ENCODE measurements at regions of chr17 and their contacts with region 1.

Region 1: DNA sequence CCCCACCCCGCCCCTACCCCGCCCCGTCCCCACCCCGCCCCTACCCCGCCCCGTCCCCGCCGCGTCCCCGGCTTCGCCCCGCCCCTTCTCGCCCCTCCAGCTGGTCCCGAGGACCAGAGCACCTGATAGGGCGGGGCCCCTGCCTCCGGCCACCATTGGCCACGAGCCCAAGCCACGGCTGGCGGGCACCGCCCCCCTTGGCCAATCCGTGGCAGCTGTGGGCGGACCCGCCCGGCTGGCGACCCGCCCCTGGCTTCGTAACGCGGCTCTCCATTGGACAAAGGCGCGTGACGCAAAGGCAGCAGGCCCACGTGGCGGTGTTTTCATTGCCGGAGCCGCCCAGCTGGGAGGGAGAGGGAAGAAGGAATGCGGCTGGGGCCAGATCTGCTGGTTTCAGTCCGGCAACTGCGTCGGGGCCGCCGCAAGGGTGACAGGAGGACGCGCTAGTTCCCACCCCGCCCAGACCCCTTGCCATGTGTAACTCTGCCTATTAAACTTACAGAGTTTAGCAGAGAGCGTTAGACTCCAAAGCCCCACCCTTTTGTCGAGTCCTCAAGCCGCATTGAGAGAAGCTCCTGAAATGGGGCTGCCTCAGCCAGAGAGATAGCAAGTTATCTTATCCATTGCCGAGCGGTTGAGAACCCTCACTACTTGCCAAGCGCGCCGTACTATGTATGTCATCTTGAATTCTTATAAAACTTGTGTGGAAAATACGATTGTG is 403 bp upstream of the WIPI1 start:
- DNase-seq: peak; percentile 91
- ATAC-seq: peak; percentile 83
- H3K4me3 ChIP-seq: peak overlapping the region; percentile 67
- H3K27ac ChIP-seq: peak overlapping the region; percentile 78
- H3K4me1 ChIP-seq: peaks cover 37% of the 10 kb centered on the region
- H3K27me3 ChIP-seq: no peaks in the 10 kb centered on the region
- CTCF ChIP-seq: no peak
- EP300 ChIP-seq: no peak
- POLR2A ChIP-seq: peak; percentile 89
- RAD21 ChIP-seq: no peak

Region 2: GRCh38 chr17:68019675-68020408 is 437.9 kb before region 1 on chr17:
- CTCF ChIA-PET with region 1: no interaction called
- POLR2A ChIA-PET with region 1: no interaction called
- RAD21 ChIA-PET with region 1: no interaction called
- SMC1A ChIA-PET with region 1: no interaction called
- in situ Hi-C with region 1: no loop called
- intact Hi-C with region 1: loop called (anchors 10 kb)
- DNase-seq: peak; percentile 97
- ATAC-seq: peak; percentile 98
- H3K4me3 ChIP-seq: peak overlapping the region; percentile 77
- H3K27ac ChIP-seq: peak overlapping the region; percentile 70
- H3K4me1 ChIP-seq: no peaks in the 10 kb centered on the region
- H3K27me3 ChIP-seq: peaks cover 0 to 2% of the 10 kb centered on the region in 2 experiments; a peak in 1 of 4 replicates
- CTCF ChIP-seq: peak; percentile 19 to 53 (median 41); a peak in 5 of 6 replicates
- EP300 ChIP-seq: no peak; a peak in 1 of 4 replicates
- POLR2A ChIP-seq: peak; percentile 87
- RAD21 ChIP-seq: no peak

Region 3: GRCh38 chr17:68179926-68180285 is 277.8 kb before region 1 on chr17:
- CTCF ChIA-PET with region 1: interaction called, 21 read pairs
- POLR2A ChIA-PET with region 1: interaction called, 17 read pairs
- RAD21 ChIA-PET with region 1: interaction called, 49 read pairs
- SMC1A ChIA-PET with region 1: interaction called, 39 read pairs
- in situ Hi-C with region 1: loop called (anchors 5 kb)
- intact Hi-C with region 1: no loop called
- DNase-seq: no peak
- ATAC-seq: no peak
- H3K4me3 ChIP-seq: no peak overlapping the region
- H3K27ac ChIP-seq: no peak overlapping the region
- H3K4me1 ChIP-seq: peaks cover 22% of the 10 kb centered on the region
- H3K27me3 ChIP-seq: no peaks in the 10 kb centered on the region
- CTCF ChIP-seq: no peak
- EP300 ChIP-seq: no peak
- POLR2A ChIP-seq: no peak
- RAD21 ChIP-seq: no peak

Region 4: GRCh38 chr17:68238164-68238872 is 219.4 kb before region 1 on chr17:
- CTCF ChIA-PET with region 1: interaction called, 6 read pairs
- POLR2A ChIA-PET with region 1: interaction called, 46 read pairs
- RAD21 ChIA-PET with region 1: interaction called, 19 read pairs
- SMC1A ChIA-PET with region 1: interaction called, 12 read pairs
- in situ Hi-C with region 1: no loop called
- intact Hi-C with region 1: no loop called
- DNase-seq: no peak
- ATAC-seq: peak; percentile 33
- H3K4me3 ChIP-seq: peak overlapping the region; percentile 61
- H3K27ac ChIP-seq: peak overlapping the region; percentile 96
- H3K4me1 ChIP-seq: peaks cover 41% of the 10 kb centered on the region
- H3K27me3 ChIP-seq: no peaks in the 10 kb centered on the region
- CTCF ChIP-seq: no peak
- EP300 ChIP-seq: no peak
- POLR2A ChIP-seq: no peak
- RAD21 ChIP-seq: no peak

Region 5: GRCh38 chr17:68291844-68292695 is 165.6 kb before region 1 on chr17:
- CTCF ChIA-PET with region 1: interaction called, 6 read pairs
- POLR2A ChIA-PET with region 1: interaction called, 28 read pairs
- RAD21 ChIA-PET with region 1: interaction called, 54 read pairs
- SMC1A ChIA-PET with region 1: interaction called, 9 read pairs
- in situ Hi-C with region 1: no loop called
- intact Hi-C with region 1: loop called (anchors 1 kb)
- DNase-seq: peak; percentile 70
- ATAC-seq: peak; percentile 78
- H3K4me3 ChIP-seq: peak overlapping the region; percentile 74
- H3K27ac ChIP-seq: peak overlapping the region; percentile 95
- H3K4me1 ChIP-seq: peaks cover 22% of the 10 kb centered on the region
- H3K27me3 ChIP-seq: no peaks in the 10 kb centered on the region
- CTCF ChIP-seq: peak; percentile 0 to 24 (median 11); a peak in 2 of 6 replicates
- EP300 ChIP-seq: peak in 1 of 2 experiments; percentile 46; a peak in 1 of 4 replicates
- POLR2A ChIP-seq: peak; percentile 87
- RAD21 ChIP-seq: no peak

Region 6: DNA sequence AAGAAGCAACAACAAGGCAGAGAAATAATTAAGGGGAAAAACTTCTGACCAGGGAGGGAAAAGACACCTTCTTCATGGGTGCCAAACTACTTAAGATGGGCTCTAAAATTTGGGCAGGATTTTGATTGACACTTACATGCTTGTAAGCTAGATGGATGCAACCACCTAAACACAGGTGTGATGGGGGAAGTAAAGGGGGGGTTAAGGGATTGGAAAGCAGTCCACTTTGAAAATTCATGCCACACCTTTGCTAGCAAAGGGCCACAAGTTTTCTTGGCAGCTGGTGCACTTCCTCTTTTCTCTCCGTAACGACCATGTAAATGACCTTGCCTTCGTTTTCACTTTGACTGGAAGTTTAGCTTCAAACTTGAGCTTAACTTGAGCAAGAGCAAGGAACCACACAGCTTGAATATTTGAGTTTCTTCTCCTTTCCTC is 40.2 kb after region 1 on chr17:
- CTCF ChIA-PET with region 1: interaction called, 5 read pairs
- POLR2A ChIA-PET with region 1: interaction called, 5 read pairs
- RAD21 ChIA-PET with region 1: interaction called, 43 read pairs
- SMC1A ChIA-PET with region 1: interaction called, 22 read pairs
- in situ Hi-C with region 1: no loop called
- intact Hi-C with region 1: no loop called
- DNase-seq: peak; percentile 94
- ATAC-seq: peak; percentile 94
- H3K4me3 ChIP-seq: peak overlapping the region; percentile 18; the same call in 1 of the 2 replicates
- H3K27ac ChIP-seq: peak overlapping the region; percentile 82
- H3K4me1 ChIP-seq: peaks cover 26% of the 10 kb centered on the region
- H3K27me3 ChIP-seq: no peaks in the 10 kb centered on the region
- CTCF ChIP-seq: no peak
- EP300 ChIP-seq: peak; percentile 66 to 98
- POLR2A ChIP-seq: no peak
- RAD21 ChIP-seq: no peak

Measured in GM12878 (cell line).